ENCODE measurements at regions of chr17 and their contacts with region 1.

Region 1: DNA sequence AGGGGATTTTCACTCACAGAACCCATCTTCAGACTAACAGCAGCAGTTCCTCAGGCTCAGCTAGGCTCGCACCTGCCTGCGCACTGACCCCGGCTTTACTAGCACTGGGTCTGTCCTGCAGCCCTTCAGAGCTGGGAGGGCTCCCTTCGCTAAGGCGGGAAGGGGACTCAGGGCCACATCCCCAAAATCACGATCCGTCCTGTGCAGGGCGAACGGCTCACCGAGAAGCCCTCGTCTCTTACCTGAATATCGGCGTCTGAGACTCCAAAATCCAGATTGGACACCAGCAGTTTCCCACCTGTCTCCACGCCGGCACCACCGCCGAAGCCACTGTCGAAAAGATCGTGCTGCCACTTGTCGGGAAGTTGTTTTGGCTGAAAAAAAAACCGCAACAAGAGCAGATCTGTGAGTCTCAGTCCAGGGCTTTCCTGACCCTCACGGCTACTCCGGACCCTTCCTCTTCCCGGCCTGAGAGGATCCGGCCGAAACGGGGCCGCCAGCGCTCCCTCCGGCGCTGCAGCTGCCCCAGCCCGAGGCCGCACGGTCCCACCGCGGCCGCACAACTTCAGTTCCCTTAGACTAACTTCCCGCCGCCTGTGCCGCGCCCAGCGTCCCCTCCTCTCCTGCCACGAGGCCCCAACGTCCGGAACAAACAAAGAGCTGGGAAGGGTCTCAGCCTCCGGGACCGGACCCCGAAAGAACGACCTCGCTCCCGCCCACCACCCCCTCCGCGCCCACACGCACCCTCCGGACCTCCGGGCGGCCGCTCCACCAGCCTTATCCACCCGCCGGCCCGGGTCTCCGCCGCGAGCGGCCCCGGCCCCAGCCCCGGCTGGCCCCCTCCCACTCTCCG is 713 bp downstream of the ALYREF start:
- DNase-seq: peak; percentile 80
- H3K4me3 Mint-ChIP-seq: peak overlapping the region; percentile 88
- H3K27ac Mint-ChIP-seq: peak overlapping the region; percentile 94
- H3K4me1 Mint-ChIP-seq: peaks cover 17% of the 10 kb centered on the region
- H3K27me3 Mint-ChIP-seq: no peaks in the 10 kb centered on the region

Region 2: GRCh38 chr17:81871387-81872230 is 19.1 kb before region 1 on chr17:
- intact Hi-C with region 1: loop called (anchors 1 kb)
- DNase-seq: peak; percentile 99
- H3K4me3 Mint-ChIP-seq: peak overlapping the region; percentile 87
- H3K27ac Mint-ChIP-seq: peak overlapping the region; percentile 96
- H3K4me1 Mint-ChIP-seq: peaks cover 31% of the 10 kb centered on the region
- H3K27me3 Mint-ChIP-seq: no peaks in the 10 kb centered on the region